Activated CD4-positive, alpha-beta memory T cell treated with anti-CD3 and anti-CD28 coated beads for 36 hours (primary cell): ENCODE measurements at regions of chr17 and their contacts with region 1.

Region 1: DNA sequence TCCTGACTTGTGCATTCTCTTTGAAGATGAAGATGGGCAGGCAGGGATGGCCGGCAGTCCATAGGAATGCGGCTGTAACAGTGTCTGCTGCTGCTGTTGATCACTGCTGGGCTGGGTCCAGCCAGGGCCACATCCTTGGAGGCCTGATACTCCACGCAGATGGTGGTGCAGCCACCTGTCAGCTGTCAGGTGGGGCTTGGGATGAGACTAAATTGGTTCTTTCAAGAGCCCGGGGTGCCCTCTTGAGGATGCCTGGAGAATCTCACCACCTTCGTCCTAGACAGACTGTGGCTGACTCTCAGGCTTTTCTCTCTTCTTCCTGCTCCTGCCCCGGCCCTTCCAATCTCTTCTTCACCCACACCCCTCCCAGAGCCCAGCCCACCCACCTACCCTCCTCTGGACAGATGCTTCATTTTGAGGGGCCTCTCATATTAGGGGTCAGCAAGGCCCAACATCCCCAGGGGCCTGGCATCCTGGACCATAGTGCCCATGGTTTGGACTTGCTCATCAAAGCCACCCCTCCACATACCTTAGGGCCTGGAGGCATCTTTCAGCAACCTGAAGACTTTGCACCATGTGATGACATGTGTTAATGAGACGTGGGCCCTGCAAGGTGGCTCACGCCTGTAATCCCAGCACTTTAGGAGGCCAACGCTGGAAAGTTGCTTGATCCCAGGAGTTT is 19.1 kb downstream of the OSBPL7 start:
- DNase-seq: peak; percentile 71
- H3K4me3 Mint-ChIP-seq: no peak overlapping the region
- H3K27ac Mint-ChIP-seq: no peak overlapping the region
- H3K4me1 Mint-ChIP-seq: no peaks in the 10 kb centered on the region
- H3K27me3 Mint-ChIP-seq: no peaks in the 10 kb centered on the region

Region 2: DNA sequence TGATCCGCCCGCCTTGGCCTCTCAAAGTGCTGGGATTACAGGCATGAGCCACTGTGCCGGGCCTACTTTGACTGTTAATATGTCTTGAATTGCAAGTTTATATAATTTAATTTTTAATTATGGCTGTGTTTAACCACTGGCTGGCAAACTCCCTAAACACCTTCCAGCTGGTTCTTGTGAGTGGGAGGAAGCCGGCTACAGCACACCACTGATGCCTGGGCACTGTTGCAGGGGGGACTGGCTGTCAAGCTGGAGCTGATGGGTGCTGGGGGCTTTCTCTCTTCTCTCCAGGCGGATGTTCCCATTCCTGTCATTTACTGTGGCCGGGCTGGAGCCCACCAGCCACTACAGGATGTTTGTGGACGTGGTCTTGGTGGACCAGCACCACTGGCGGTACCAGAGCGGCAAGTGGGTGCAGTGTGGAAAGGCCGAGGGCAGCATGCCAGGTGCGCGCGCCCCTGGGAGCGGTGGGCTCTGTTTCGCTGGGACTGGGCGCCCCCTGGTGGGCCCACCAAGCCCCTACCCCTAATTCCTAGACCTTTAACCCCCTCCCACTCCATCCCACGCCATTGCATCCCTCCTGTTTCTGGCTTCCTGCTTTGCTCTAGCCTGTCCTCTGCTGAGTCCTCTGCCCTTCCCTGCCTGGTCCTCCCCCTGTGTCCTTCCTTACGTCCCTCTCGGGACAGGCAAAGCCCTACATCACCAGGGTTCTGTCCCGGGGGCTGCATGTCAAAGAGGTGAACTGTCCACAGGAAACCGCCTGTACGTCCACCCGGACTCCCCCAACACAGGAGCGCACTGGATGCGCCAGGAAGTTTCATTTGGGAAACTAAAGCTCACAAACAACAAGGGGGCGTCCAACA is 59.9 kb before region 1 on chr17:
- CTCF ChIA-PET with region 1: interaction called, 3 read pairs
- POLR2A ChIA-PET with region 1: no interaction called
- intact Hi-C with region 1: loop called (anchors 5 kb)
- DNase-seq: peak; percentile 48
- H3K4me3 Mint-ChIP-seq: no peak overlapping the region
- H3K27ac Mint-ChIP-seq: peak overlapping the region; percentile 75
- H3K4me1 Mint-ChIP-seq: peaks cover 42% of the 10 kb centered on the region
- H3K27me3 Mint-ChIP-seq: no peaks in the 10 kb centered on the region

Region 3: GRCh38 chr17:47776330-47777197 is 25.9 kb before region 1 on chr17:
- CTCF ChIA-PET with region 1: interaction called, 5 read pairs
- POLR2A ChIA-PET with region 1: no interaction called
- intact Hi-C with region 1: loop called (anchors 2 kb)
- DNase-seq: peak; percentile 45
- H3K4me3 Mint-ChIP-seq: no peak overlapping the region
- H3K27ac Mint-ChIP-seq: no peak overlapping the region
- H3K4me1 Mint-ChIP-seq: no peaks in the 10 kb centered on the region
- H3K27me3 Mint-ChIP-seq: peaks cover 44% of the 10 kb centered on the region

Region 4: GRCh38 chr17:47789611-47790561 is 12.6 kb before region 1 on chr17:
- CTCF ChIA-PET with region 1: interaction called, 11 read pairs
- POLR2A ChIA-PET with region 1: no interaction called
- intact Hi-C with region 1: no loop called
- DNase-seq: peak; percentile 78
- H3K4me3 Mint-ChIP-seq: peak overlapping the region; percentile 66
- H3K27ac Mint-ChIP-seq: no peak overlapping the region
- H3K4me1 Mint-ChIP-seq: peaks cover 11% of the 10 kb centered on the region
- H3K27me3 Mint-ChIP-seq: peaks cover 43% of the 10 kb centered on the region

Region 5: DNA sequence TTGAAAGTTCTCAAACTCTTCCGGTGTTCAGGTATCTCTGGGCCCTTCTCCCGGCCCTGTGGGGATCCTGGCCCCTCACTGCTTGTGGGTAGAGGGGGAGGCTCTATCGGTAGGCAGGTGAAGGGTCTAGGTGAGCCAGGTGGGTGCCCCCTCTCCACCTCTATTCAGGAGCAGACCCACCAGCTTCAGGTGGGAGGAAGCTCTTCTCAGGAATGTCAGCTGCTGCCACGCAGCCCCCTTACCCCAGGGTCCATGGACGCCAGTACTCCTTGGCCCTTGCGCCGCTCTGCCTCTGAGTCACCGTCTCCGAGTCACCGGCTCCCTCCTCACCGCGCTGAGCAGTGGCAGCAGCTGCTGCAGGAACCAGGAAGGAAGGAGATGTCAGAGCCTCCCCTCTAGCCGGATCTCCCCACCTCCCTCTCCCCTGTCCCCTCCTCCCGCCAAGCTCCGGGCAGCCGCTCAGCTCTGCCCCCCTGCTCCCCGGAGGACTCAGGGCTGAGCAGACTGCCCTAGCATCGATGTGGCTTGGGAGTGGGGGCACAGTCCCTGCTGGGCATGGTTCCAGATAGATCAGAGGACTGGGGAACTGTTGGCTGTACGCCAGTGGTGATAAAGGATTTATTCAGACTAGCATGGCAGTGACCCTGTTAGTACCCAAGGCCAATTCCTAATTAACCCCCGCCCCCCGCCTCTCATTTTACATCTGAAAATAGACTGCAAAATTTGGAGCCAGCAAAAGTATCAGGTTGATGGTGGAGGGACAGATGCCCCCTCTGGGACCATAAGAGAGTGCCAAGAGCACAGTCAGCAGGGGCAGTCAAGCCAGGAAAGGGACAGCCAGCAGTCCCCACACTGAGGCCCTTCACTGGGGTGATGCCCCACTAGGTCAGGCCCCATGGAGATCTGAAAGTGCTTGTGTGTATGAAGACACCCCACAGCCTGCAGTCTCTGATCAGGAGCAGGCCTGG is 19.2 kb after region 1 on chr17 and contains the start of gene OSBPL7:
- CTCF ChIA-PET with region 1: no interaction called
- POLR2A ChIA-PET with region 1: no interaction called
- intact Hi-C with region 1: no loop called
- DNase-seq: peak; percentile 88
- H3K4me3 Mint-ChIP-seq: peak within 1 kb of the TSS; percentile 92
- H3K27ac Mint-ChIP-seq: peak within 1 kb of the TSS; percentile 72
- H3K4me1 Mint-ChIP-seq: peaks cover 26% of the 10 kb centered on the region
- H3K27me3 Mint-ChIP-seq: no peaks in the 10 kb centered on the region
- total RNA-seq, gene OSBPL7: 14.7 to 15.6 TPM

Region 6: GRCh38 chr17:47837401-47838039 is 35.0 kb after region 1 on chr17:
- CTCF ChIA-PET with region 1: no interaction called
- POLR2A ChIA-PET with region 1: no interaction called
- intact Hi-C with region 1: no loop called
- DNase-seq: no peak
- H3K4me3 Mint-ChIP-seq: no peak overlapping the region
- H3K27ac Mint-ChIP-seq: no peak overlapping the region
- H3K4me1 Mint-ChIP-seq: peaks cover 42% of the 10 kb centered on the region
- H3K27me3 Mint-ChIP-seq: no peaks in the 10 kb centered on the region